Activated CD4-positive, alpha-beta memory T cell treated with anti-CD3 and anti-CD28 coated beads, Interleukin-2, amount 10 ng/mL, durations not matched to agents 7 days and 5 days (primary cell): ENCODE measurements at regions of chr6 and their contacts with region 1.

Region 1: DNA sequence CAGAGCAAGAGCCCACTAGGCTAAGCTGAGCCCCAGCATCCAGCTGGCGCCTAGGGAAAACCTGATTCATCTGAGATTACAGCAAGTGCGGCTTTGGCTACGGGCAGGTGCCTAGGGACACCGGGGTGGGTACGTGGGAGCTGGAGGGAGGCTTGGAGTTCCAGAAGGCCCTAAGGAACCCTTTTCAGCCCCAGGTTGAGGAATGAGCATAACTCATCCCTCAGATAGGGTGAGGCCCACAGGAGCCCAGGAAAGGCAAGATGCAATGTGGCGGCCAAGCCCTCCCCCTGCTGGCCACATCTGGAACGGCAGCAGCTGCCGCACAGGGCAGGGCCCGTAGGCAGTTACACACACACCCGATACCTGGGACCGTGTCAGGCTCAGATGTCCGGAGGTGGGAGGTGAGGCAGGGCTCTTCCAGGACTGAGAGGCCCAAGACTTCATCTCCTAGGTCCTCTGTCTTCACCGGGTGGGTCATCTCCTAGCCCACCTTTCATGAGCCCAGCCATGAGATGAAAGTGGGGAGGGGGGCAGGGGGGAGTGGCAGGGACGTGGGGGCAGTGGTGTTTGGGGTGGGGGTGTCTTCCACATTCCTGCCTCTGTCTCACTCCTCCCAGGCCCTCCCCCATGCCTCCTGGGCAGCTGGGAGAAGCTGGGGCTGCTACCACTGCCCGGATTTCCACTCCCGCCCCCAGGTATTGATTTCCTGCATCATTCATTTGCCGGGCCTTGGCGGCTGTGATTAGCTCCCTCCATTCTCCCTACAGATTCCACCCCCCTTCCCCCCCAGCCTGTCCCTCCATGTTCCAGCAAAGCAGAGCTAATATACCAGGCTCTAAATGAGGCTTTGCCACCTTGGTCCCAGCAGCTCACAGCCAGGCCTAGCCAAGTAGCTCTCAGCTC is 5.5 kb downstream of the MDGA1 start:
- DNase-seq: peak; percentile 83
- H3K4me3 Mint-ChIP-seq: no peak overlapping the region
- H3K27ac Mint-ChIP-seq: no peak overlapping the region
- H3K4me1 Mint-ChIP-seq: peaks cover 31% of the 10 kb centered on the region
- H3K27me3 Mint-ChIP-seq: no peaks in the 10 kb centered on the region

Region 2: DNA sequence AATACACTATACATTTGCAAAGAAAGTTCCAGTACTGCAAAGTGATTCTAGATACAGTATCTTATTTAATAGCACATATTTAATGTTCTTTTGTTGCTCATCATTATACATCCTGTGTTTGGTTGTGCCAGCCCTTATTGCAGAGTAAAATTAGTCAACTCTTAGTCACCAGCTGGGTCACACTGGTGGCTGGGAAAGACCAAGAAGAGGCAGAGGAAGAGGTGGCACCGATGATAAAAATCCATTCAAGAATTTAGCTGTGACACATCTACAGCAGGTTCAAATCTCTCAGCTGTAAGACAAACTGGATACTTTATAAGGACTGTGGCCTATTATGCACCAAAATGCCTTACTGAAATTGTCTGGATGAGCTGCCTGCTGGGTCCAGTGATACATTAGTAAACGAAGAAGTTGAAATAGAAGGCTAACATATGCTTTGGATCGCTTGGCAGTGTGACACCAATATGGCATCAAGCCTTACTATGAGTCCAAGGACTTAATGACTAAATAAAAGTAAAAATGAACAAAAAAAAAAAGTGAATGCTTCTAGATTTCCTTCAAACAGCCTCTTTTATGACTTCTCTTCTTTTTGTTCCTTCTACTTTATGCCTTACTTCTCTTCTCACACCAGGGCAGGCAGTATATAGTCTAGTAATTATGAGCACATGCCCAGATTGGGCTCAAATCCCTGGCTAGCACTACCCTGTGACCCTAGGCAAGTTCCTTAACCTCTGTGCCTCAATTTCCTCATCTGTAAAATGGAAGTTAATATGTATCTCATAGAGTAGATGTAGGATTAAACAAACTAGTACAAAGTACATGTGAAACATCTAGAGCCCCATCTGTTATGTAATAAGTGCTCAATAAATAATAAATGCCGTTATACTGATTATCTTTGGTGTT is 367.8 kb before region 1 on chr6:
- CTCF ChIA-PET with region 1: interaction called, 10 read pairs
- POLR2A ChIA-PET with region 1: no interaction called
- DNase-seq: peak; percentile 22
- H3K4me3 Mint-ChIP-seq: no peak overlapping the region
- H3K27ac Mint-ChIP-seq: no peak overlapping the region
- H3K4me1 Mint-ChIP-seq: peaks cover 25% of the 10 kb centered on the region
- H3K27me3 Mint-ChIP-seq: no peaks in the 10 kb centered on the region

Region 3: GRCh38 chr6:37381579-37381978 is 310.6 kb before region 1 on chr6:
- CTCF ChIA-PET with region 1: interaction called, 12 read pairs
- POLR2A ChIA-PET with region 1: no interaction called
- DNase-seq: peak; percentile 34
- H3K4me3 Mint-ChIP-seq: no peak overlapping the region
- H3K27ac Mint-ChIP-seq: no peak overlapping the region
- H3K4me1 Mint-ChIP-seq: no peaks in the 10 kb centered on the region
- H3K27me3 Mint-ChIP-seq: no peaks in the 10 kb centered on the region

Region 4: DNA sequence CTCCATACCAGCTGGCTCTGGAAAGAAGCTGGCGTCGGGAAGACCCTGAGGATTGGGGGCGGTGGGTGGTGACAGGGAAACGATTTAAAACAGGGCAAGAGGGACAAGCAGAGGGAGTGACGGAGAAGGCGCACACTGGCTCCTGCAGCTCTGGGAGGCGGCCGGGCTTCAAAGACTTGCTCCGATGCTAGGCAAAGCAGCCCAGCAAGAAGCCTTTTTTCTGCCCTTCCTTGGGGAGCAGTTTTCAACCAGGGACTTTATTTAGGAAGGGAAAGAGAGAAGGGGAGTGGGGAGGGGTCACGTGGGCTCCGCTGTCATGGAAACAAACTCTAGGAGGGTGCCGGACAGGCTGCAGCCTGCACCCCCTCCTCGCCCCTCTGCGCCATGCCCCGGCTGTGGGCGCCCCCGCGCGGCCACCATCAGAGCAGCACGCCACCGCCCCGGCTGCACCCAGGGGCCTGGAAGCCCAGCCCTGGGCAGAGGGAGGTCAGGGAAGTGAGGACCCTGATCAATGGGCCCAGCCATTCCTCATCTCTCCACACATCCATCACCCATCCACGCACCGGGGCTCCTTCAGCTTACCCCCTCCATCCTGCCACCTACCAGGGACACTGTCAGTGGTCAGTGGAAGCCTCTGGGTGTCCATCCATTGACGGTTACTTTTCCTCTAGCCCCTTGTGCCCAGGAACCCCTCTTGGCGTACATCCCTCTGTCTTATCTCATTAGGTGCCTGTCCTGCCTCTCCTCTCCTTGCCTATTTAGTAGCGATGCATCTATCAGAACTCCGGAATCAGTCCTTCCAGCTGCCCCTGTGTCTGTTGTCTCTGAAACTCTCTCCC is 125.8 kb before region 1 on chr6:
- CTCF ChIA-PET with region 1: interaction called, 10 read pairs
- POLR2A ChIA-PET with region 1: interaction called, 3 read pairs
- DNase-seq: peak; percentile 71
- H3K4me3 Mint-ChIP-seq: no peak overlapping the region
- H3K27ac Mint-ChIP-seq: no peak overlapping the region
- H3K4me1 Mint-ChIP-seq: peaks cover 5% of the 10 kb centered on the region
- H3K27me3 Mint-ChIP-seq: peaks cover 17% of the 10 kb centered on the region

Region 5: DNA sequence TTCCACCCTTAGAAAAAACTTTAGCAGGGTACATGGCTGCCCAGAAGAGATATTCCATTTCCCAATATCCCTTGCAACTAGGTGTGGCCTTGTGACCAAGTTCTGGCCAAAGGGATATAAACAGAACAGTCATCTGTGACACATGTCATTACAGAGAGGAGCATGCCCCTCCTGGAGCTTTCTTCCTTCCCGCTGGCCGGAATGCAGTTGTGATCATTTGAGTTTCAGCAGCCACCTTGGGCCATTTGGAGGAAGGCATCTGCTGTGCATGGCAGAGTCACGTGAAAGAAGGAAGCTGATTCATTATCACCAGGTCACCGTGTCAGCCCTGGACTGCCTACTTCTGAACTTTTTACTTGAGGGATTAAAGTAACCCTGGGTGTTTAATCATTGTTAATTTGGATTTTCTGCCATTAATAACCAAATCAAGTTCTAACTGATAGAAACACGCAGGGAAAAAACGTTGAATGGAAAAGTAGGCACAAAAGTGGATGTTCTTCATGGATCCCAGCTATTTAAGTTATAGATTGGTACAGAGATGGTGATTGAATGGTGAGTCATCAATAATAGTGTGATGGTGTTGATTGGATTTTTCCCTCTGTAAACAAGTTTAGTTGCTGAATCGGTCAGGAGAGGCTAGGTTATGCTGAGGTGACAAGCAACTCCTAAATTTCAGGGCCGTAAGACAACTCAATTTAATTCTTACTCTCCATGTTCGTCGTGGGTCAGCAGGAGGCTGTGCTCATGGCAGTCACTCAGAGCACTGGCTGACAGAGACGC is 111.8 kb before region 1 on chr6:
- CTCF ChIA-PET with region 1: interaction called, 10 read pairs
- POLR2A ChIA-PET with region 1: no interaction called
- DNase-seq: no peak
- H3K4me3 Mint-ChIP-seq: no peak overlapping the region
- H3K27ac Mint-ChIP-seq: no peak overlapping the region
- H3K4me1 Mint-ChIP-seq: no peaks in the 10 kb centered on the region
- H3K27me3 Mint-ChIP-seq: peaks cover 1% of the 10 kb centered on the region